MCF 10A (cell line): ENCODE measurements at regions of chr11 and their contacts with region 1.

Region 1: GRCh38 chr11:45655347-45655756 is 10.1 kb downstream of the CHST1 start:
- DNase-seq: peak; percentile 63
- H3K4me3 Mint-ChIP-seq: no peak overlapping the region
- H3K27ac Mint-ChIP-seq: no peak overlapping the region
- H3K4me1 Mint-ChIP-seq: no peaks in the 10 kb centered on the region
- H3K27me3 Mint-ChIP-seq: peaks cover 1% of the 10 kb centered on the region
- CTCF ChIP-seq: peak; percentile 89

Region 2: DNA sequence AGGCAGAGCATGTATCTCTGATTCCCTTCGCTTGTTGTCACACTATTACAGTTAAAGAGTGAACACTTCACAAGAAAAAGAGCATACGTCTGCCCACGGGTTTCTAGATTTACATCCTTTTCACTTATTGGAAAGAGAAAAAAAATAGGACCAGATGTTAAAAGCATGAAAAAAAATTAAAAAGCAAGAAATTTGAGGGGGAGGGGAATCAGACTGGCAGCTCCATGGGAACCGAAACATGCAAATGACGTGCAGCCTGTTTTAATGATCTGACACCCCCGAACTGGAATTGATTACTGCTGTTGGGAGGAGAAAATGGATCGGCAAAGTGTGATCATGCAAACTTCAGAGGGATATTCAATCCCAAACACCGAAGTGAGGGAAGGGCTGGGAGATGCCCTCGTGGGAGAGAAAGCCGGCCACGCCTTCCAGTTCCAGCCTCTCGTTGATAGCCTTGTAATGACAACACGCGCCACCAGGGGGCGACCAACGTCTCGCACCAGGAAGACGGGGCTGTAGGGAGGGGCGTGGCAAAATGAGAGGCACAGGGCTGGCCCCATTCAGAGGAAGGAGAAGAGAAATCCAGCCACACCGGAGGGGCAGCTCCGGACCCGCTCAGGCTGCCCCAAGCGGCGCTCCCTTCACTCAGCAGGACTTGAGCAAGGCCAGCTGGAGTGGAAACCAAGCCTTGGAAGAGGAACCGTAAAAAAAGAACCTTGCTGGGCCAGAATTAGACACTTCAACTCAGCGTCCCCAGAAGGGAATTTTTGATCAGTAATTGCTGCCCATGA is 315.4 kb before region 1 on chr11:
- CTCF ChIA-PET with region 1: interaction called, 9 read pairs
- POLR2A ChIA-PET with region 1: no interaction called
- intact Hi-C with region 1: loop called (anchors 1 kb)
- DNase-seq: peak; percentile 86
- H3K4me3 Mint-ChIP-seq: no peak overlapping the region
- H3K27ac Mint-ChIP-seq: no peak overlapping the region
- H3K4me1 Mint-ChIP-seq: peaks cover 6% of the 10 kb centered on the region
- H3K27me3 Mint-ChIP-seq: peaks cover 52% of the 10 kb centered on the region
- CTCF ChIP-seq: peak; percentile 90

Region 3: DNA sequence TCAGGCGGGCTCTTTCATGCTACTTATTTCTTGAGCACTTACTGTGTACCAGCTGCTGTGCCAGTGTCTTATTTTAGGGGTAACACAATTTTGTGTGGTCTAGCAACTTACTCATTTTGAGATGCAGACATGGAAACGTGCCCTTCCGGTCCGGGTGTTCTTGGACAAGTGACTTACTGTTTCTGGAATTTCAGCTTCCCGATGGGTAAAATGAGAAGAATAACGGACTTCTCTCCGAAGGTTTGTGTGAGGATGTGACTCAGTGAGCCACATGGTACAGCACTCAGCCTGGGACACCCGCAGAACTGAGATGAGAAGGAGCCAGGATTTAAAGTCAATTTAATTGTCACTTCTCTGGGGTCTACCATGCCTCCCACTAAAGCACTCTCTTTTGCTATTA is 254.8 kb before region 1 on chr11:
- CTCF ChIA-PET with region 1: interaction called, 42 read pairs
- POLR2A ChIA-PET with region 1: no interaction called
- intact Hi-C with region 1: no loop called
- DNase-seq: peak; percentile 22
- H3K4me3 Mint-ChIP-seq: no peak overlapping the region
- H3K27ac Mint-ChIP-seq: no peak overlapping the region
- H3K4me1 Mint-ChIP-seq: no peaks in the 10 kb centered on the region
- H3K27me3 Mint-ChIP-seq: peaks cover 48% of the 10 kb centered on the region
- CTCF ChIP-seq: no peak

Region 4: DNA sequence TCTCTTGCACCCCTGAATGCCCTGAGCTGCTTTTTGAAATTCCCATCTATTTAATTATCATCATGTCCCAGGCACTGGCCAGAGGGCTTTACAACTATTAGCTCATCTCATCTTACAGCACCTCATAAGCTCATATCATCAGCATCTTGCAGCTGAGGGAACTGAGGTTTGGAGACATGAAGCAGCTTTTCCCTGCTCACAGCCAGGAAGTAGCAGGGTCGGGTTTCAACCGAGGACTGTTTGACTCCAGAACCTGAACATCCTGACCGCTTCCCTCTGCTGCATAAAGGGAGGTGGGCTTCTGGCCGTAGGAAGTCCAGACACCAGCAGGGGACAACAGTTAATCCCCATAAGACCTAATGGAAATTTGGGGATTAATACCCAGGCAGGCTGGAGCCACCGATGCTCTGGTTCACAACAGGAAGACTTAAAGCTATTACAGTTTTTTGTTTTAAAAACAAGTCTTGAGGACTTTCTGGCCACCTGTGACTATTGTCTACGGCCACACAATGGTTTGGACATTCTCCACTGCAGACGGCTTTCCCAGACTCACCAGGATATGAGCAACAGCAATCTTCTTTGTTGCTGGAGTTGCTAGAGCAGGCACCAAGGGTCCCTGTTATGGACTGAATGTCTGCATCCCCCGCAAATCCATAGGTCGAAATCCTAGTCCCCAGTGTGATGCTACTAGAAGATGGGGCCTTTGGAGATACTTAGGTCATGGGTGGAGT is 37.3 kb before region 1 on chr11:
- CTCF ChIA-PET with region 1: interaction called, 11 read pairs
- POLR2A ChIA-PET with region 1: no interaction called
- intact Hi-C with region 1: no loop called
- DNase-seq: no peak
- H3K4me3 Mint-ChIP-seq: no peak overlapping the region
- H3K27ac Mint-ChIP-seq: no peak overlapping the region
- H3K4me1 Mint-ChIP-seq: no peaks in the 10 kb centered on the region
- H3K27me3 Mint-ChIP-seq: peaks cover 27% of the 10 kb centered on the region
- CTCF ChIP-seq: no peak

Region 5: DNA sequence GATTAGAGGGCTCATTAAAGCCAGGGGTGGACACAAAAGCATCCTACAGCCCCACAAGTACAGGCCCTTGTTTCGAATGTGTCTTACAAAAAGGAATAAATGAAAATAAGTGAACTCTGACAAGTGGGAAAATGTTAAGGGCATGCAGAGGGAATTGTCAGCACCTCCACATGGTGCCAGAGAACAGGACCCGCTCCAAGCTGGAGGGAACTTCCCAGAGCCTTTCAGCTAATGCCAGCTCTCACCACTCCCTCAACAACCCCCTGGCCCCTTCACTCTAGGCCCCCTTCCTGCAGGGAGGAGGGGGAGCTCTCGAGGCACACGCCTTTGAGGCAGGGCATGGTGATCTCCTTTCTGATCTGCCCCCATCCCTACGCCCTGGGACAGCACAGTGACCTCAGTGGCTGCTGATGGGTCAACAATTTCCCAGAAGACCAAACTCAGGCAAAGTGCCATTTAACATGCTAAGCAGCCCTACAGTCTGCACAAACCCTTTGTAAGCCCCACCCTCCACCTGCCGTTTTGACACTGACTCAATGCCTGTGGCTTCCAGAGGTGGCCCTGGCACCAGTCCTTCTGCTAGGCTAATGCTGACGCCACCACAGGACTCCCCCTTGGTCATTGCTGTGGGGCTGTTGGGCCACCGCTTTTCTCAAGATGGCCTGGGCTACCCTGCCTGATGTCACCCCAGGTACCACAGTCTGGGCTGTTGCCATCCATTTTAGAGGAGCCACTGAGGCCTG is 22.6 kb after region 1 on chr11:
- CTCF ChIA-PET with region 1: interaction called, 14 read pairs
- POLR2A ChIA-PET with region 1: no interaction called
- intact Hi-C with region 1: no loop called
- DNase-seq: no peak
- H3K4me3 Mint-ChIP-seq: no peak overlapping the region
- H3K27ac Mint-ChIP-seq: no peak overlapping the region
- H3K4me1 Mint-ChIP-seq: no peaks in the 10 kb centered on the region
- H3K27me3 Mint-ChIP-seq: no peaks in the 10 kb centered on the region
- CTCF ChIP-seq: no peak